ENCODE measurements at regions of chr3 and their contacts with region 1.

Region 1: DNA sequence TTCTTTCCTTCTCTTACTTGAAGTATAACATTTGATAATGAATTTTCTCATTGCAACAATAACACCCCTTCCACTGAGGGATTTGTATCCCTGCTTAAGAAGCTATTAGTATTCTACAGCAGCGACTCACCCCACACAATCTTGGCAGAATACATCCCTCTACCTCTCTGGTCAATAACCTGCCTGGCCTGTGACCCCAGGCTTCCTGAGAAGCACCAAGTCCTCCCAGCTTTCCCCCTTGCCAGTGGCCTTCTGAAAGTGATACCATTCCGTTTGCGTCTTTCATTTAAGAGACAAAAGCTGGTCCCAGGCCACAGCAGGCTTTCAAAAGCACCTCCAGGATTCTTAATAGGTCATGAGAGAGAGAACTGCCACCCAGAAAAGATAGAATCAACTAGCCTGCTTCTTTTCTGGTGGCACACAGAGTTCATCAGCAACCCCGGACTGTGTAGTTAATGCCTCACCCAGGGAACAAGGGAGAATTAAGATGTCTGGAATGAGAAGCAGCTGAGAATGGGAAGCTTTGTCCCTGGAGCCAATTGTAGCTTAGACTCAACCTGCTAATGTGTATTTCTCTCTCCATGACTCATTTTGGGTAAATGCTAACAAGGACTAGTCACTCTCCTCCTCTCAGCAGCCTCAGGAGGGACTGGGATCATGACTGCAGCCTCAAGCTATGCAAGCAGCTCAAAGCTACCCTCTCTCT is 101.0 kb upstream of the CPNE4 start:
- DNase-seq: peak; percentile 98
- H3K4me3 ChIP-seq: peak overlapping the region; percentile 26 to 42 (median 31)
- H3K27ac ChIP-seq: peak overlapping the region; percentile 100
- H3K4me1 ChIP-seq: peaks cover 29% of the 10 kb centered on the region
- H3K27me3 ChIP-seq: no peaks in the 10 kb centered on the region
- CTCF ChIP-seq: no peak

Region 2: DNA sequence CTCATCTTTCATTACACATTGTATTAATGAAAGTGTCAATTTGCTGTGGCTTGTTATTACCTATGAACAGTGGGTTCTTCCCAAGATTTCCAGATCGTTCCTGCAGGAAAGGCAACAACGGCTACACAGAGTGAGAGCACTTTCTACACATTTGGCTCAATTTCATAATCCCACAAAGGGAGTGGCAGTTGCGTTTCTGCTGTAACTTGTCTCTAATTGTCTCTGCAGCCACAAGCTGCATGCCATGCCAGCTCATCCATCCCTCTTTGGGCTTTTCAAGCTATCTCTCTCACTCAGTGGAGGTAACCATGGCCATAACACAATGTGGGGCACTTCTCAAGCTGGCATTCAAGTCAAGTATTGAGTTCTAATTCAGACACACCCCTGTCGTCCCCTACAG is 73.2 kb before region 1 on chr3:
- CTCF ChIA-PET with region 1: no interaction called
- dilution Hi-C with region 1: no loop called
- in situ Hi-C with region 1: no loop called
- intact Hi-C with region 1: loop called (anchors 2 kb)
- DNase-seq: peak; percentile 85
- H3K4me3 ChIP-seq: no peak overlapping the region
- H3K27ac ChIP-seq: peak overlapping the region; percentile 83
- H3K4me1 ChIP-seq: peaks cover 23% of the 10 kb centered on the region
- H3K27me3 ChIP-seq: no peaks in the 10 kb centered on the region
- CTCF ChIP-seq: no peak

Region 3: DNA sequence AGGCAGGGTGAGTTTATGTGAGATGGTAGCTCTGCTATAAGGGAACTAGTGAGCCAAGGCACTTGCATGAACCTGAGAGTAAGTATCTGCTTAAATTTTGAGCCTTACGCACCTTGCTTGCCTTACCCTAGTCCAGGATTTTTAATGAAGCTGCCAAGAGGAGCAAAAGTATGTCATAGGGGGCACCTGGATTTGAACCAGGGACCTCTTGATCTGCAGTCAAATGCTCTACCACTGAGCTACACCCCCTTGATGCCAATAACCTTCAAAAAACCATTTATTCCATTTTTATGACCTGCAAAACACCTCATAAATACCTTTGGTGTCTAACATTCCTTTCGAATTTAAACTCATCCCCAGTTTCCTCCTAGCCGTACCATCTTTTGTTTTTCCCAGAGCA is 93.1 kb after region 1 on chr3:
- CTCF ChIA-PET with region 1: interaction called, 3 read pairs
- dilution Hi-C with region 1: no loop called
- in situ Hi-C with region 1: no loop called
- intact Hi-C with region 1: loop called (anchors 5 kb)
- DNase-seq: peak; percentile 51
- H3K4me3 ChIP-seq: no peak overlapping the region
- H3K27ac ChIP-seq: no peak overlapping the region
- H3K4me1 ChIP-seq: no peaks in the 10 kb centered on the region
- H3K27me3 ChIP-seq: no peaks in the 10 kb centered on the region
- CTCF ChIP-seq: no peak

Region 4: DNA sequence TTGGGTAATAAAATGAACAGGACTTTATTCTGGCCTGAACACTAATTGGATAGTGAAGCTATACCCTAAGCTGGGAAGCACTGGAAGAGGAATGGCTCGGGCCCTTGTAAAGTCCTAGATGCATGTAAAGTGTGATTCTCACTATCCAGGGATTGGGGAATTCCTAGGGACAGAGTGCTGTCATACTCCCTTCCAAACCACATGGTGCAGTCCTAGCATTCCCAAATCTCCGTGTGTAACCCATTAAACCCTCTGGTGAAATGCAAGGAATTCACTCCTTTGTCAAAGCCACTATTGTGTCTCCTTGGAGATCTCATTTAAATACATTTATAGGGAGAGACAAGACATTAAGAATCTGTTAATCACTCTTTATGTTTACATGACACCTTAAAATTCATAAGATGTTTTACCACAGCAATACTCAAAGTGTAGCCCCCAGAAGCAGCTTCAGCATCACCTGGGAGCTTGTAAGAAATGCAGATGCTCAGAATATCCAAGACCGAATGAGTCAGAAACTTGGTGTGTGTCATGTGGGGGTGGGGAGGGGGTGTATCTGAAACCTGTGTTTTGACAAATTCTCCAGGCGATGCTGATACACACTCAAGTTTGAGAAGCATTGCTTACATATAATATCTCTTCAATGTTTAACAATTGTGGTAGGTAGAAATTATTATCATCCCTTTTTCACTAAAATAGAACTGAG is 708.2 kb after region 1 on chr3:
- CTCF ChIA-PET with region 1: no interaction called
- dilution Hi-C with region 1: no loop called
- in situ Hi-C with region 1: no loop called
- intact Hi-C with region 1: no loop called
- DNase-seq: no peak
- H3K4me3 ChIP-seq: no peak overlapping the region
- H3K27ac ChIP-seq: no peak overlapping the region
- H3K4me1 ChIP-seq: no peaks in the 10 kb centered on the region
- H3K27me3 ChIP-seq: no peaks in the 10 kb centered on the region
- CTCF ChIP-seq: no peak

Measured in mammary epithelial cell (primary cell).